ENCODE measurements at regions of chr1 and their contacts with region 1.

Region 1: GRCh38 chr1:206489980-206490770 is 17.2 kb upstream of the RASSF5 start:
- DNase-seq: peak; percentile 53
- H3K4me3 ChIP-seq: no peak overlapping the region
- CTCF ChIP-seq: peak; percentile 99

Region 2: GRCh38 chr1:206435445-206435844 is 54.7 kb before region 1 on chr1:
- in situ Hi-C with region 1: loop called (anchors 5 kb)
- DNase-seq: no peak
- H3K4me3 ChIP-seq: no peak overlapping the region
- CTCF ChIP-seq: no peak

Region 3: DNA sequence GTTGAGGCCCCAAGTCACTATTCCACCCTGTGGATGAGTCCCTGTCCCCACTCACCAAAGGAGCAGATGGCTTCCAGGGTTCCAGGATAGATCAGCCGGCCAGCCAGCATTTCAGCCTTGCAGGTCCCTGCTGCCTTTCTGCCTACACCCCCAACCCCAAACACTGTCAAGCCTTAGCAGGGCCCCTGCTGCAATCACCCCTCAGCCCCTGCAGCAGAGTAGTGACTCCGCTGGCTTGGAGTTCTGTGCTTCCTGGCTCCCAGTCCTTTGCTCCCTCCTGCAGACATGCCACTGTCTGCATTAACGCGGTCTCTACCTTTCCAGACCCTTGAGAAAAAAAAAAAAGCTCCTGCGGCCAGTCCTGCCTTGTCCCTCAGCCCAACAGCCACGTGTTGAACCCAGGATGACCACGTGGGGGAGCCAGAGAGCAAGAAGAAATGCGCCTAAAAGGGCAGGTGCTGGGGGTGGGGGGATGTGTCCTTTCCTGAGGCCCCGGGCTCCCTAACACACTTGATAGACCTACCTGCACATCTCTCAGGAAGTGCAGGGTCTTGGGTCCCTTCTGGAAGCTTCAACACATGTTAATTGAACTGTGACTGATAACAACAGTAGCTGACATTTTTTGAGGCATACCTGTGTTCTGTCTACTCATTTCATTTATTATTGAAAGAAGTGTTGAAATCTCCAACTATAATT is 54.5 kb after region 1 on chr1:
- in situ Hi-C with region 1: loop called (anchors 5 kb)
- DNase-seq: no peak
- H3K4me3 ChIP-seq: no peak overlapping the region
- CTCF ChIP-seq: peak; percentile 95

Region 4: DNA sequence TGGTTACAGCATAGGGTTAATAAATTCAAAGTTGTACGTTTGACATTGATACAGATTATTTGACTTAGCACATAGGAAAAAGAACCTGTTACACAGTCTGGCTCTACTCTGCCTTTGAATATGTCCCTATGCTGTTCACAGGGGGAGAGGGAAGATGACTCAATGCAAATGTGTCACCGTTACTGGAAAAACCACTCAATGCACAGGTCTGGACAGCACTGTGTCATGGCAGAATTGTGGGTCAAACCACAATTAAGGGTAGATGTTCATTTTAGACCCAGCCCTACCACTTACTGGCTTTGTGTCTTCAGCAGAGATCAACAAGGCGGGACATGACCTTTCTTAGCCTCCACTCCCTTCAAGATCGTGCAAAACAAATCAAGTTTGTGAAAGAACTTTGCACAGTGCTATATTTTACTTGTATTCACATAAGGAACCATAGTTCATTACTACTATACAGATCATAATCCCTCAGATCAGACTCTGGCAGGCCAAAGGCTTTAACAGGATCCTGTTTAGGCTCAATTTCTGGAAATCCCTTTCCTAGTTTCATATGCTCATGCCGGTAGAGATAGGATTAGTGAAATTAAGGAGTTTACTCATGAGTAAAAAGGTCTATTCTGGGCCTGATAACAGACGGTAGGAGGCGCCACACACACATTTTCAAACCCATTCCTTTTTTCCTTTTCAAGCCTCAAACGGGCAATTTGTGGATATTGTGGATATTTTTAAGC is 100.0 kb after region 1 on chr1:
- in situ Hi-C with region 1: no loop called
- DNase-seq: no peak
- H3K4me3 ChIP-seq: no peak overlapping the region
- CTCF ChIP-seq: peak; percentile 29

Region 5: GRCh38 chr1:206734499-206735142 is 244.4 kb after region 1 on chr1:
- in situ Hi-C with region 1: loop called (anchors 5 kb)
- DNase-seq: no peak
- H3K4me3 ChIP-seq: no peak overlapping the region
- CTCF ChIP-seq: peak; percentile 89

Region 6: DNA sequence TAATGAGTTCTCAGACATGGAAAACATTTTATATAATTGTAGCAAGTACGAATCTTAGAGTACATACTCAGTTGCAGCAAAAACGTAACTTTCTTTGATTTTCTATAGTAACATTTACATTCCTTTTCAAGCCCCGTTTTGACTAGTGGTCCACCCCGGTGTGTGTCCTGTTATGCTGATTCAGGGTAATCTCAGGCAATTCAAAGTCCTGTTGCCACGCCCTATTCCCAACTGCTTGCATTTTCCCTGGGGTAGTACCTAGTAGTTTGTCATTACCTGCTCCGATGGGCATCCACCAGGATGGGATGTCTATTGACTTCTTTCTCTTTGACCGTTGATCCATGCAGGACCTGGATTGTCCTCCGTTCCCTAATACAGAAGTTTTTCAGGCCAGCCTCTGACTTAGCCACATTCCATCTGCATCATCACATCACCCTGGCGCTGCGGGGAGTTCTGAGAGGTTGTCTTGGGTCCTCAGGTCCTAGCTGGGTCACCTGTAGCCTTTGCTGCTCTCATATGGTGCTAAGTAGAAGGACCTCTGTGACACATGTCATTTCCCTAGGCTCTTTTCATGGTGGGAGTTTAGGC is 495.1 kb after region 1 on chr1:
- in situ Hi-C with region 1: loop called (anchors 5 kb)
- DNase-seq: no peak
- H3K4me3 ChIP-seq: no peak overlapping the region
- CTCF ChIP-seq: no peak

Measured in astrocyte of the cerebellum (primary cell).